Astrocyte of the cerebellum (primary cell): ENCODE measurements at regions of chr1 and their contacts with region 1.

Region 1: DNA sequence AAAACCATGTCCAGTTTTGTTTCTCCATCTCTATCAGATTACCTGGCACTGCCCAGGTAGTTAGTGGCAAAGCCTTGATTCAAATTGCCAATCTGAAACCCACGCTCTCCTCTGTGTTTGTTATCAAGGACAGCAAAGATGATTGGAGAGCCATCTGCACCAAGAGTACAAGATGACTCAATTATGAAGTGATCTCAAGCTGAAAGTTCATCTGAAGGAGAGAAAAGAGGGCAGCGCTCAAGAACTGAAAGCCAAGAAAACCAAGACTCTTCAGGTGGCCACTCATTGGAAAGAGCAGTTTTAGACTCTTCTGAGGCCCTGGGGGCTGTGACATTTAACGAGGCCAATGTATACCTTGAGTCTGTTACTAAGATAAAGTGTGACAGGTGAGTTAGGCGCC is 13.8 kb downstream of the RXRG start:
- DNase-seq: no peak
- H3K4me3 ChIP-seq: no peak overlapping the region
- CTCF ChIP-seq: no peak

Region 2: GRCh38 chr1:165342587-165342986 is 88.5 kb before region 1 on chr1:
- in situ Hi-C with region 1: no loop called
- DNase-seq: no peak
- H3K4me3 ChIP-seq: no peak overlapping the region
- CTCF ChIP-seq: no peak

Region 3: GRCh38 chr1:165392634-165393571 is 38.2 kb before region 1 on chr1:
- in situ Hi-C with region 1: no loop called
- DNase-seq: peak; percentile 93
- H3K4me3 ChIP-seq: peak overlapping the region; percentile 5
- CTCF ChIP-seq: peak; percentile 98

Region 4: GRCh38 chr1:165496501-165496900 is 65.4 kb after region 1 on chr1:
- in situ Hi-C with region 1: loop called (anchors 5 kb)
- DNase-seq: no peak
- H3K4me3 ChIP-seq: no peak overlapping the region
- CTCF ChIP-seq: no peak